ENCODE measurements at regions of chr15 and their contacts with region 1.

Region 1: DNA sequence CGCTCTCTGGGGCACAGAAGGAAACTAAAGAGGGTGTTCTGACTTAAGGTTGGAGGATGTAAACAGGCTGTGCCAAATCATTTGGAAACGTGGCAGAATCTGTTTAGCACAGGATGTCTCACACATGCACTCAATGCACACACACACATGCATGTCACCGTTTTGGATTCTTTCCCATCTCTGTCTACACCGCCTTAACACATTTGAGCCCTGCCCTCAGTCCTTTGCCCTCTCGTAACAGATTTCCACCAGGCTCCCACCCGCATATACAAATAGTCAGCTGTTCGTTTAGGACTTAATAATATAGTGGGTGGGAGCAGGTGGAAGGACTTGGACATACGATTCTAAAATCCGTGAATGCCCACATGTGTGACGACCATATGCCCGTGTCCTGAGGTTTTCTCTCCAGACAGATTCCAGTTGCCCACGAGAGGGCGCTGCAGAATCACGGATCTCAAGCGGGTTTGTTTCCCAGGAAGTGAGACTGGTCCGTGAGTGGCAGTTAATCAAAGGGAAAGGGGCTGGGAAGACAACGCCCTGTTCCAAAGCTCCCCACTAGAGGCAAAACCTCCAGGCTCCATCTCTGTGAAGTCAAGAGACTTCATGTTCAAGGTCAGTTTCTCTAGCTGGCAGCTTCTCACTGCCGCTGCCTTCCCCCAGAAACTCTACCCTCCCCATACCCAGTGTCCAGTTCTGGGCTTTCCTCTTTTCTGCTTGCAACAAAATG is 44.5 kb downstream of the NOX5 start:
- DNase-seq: peak; percentile 86
- ATAC-seq: peak; percentile 57
- H3K4me3 Mint-ChIP-seq: no peak overlapping the region
- H3K27ac Mint-ChIP-seq: no peak overlapping the region
- H3K4me1 Mint-ChIP-seq: peaks cover 20% of the 10 kb centered on the region
- H3K27me3 Mint-ChIP-seq: peaks cover 4% of the 10 kb centered on the region
- CTCF ChIP-seq: peak; percentile 95

Region 2: DNA sequence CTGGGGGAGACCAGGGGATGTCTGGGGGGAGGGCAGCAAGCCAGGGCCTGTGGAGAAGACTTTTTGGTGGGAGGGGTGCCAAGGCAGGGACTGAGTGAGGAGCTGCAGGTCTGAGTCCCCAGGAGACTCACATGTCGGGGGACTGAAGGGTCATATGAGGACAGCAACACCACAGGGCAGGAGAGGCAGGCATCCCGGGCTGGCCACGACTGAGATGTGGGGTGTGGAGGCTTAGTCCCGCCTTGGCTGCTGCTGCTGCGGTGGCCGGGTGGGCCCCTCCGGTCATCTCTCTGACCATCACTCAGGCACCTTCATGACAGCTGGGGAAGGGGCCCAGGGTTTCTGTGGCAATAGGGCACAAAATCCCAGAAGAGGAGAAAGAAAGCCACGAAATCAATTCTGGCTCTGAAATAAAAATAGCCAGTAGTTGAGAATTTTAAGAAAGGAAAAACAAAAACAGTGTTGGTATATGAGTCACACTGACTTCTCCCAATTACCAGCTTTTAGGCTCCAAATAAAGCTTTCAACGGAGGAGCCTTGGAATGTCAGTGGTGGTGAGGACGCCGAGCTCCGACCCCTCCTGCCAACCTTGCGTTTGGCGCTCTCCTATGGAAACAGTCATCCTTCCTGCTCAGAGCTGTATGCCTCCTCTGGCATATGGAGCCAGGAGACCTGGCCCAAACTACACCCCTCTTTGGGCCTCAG is 574.1 kb before region 1 on chr15:
- CTCF ChIA-PET with region 1: no interaction called
- POLR2A ChIA-PET with region 1: no interaction called
- intact Hi-C with region 1: no loop called
- DNase-seq: no peak
- ATAC-seq: no peak
- H3K4me3 Mint-ChIP-seq: no peak overlapping the region
- H3K27ac Mint-ChIP-seq: no peak overlapping the region
- H3K4me1 Mint-ChIP-seq: no peaks in the 10 kb centered on the region
- H3K27me3 Mint-ChIP-seq: peaks cover 12% of the 10 kb centered on the region
- CTCF ChIP-seq: no peak

Region 3: GRCh38 chr15:68991723-68992122 is 67.3 kb before region 1 on chr15:
- CTCF ChIA-PET with region 1: no interaction called
- POLR2A ChIA-PET with region 1: no interaction called
- intact Hi-C with region 1: no loop called
- DNase-seq: no peak
- ATAC-seq: no peak
- H3K4me3 Mint-ChIP-seq: no peak overlapping the region
- H3K27ac Mint-ChIP-seq: no peak overlapping the region
- H3K4me1 Mint-ChIP-seq: no peaks in the 10 kb centered on the region
- H3K27me3 Mint-ChIP-seq: no peaks in the 10 kb centered on the region
- CTCF ChIP-seq: no peak

Region 4: GRCh38 chr15:69225355-69226025 is 166.5 kb after region 1 on chr15:
- CTCF ChIA-PET with region 1: interaction called, 16 read pairs
- POLR2A ChIA-PET with region 1: no interaction called
- intact Hi-C with region 1: loop called (anchors 5 kb)
- DNase-seq: no peak
- ATAC-seq: no peak
- H3K4me3 Mint-ChIP-seq: no peak overlapping the region
- H3K27ac Mint-ChIP-seq: no peak overlapping the region
- H3K4me1 Mint-ChIP-seq: no peaks in the 10 kb centered on the region
- H3K27me3 Mint-ChIP-seq: no peaks in the 10 kb centered on the region
- CTCF ChIP-seq: no peak

Region 5: GRCh38 chr15:69265347-69265955 is 206.5 kb after region 1 on chr15:
- CTCF ChIA-PET with region 1: interaction called, 10 read pairs
- POLR2A ChIA-PET with region 1: no interaction called
- intact Hi-C with region 1: loop called (anchors 5 kb)
- DNase-seq: no peak
- ATAC-seq: no peak
- H3K4me3 Mint-ChIP-seq: no peak overlapping the region
- H3K27ac Mint-ChIP-seq: no peak overlapping the region
- H3K4me1 Mint-ChIP-seq: no peaks in the 10 kb centered on the region
- H3K27me3 Mint-ChIP-seq: no peaks in the 10 kb centered on the region
- CTCF ChIP-seq: peak; percentile 28

Region 6: DNA sequence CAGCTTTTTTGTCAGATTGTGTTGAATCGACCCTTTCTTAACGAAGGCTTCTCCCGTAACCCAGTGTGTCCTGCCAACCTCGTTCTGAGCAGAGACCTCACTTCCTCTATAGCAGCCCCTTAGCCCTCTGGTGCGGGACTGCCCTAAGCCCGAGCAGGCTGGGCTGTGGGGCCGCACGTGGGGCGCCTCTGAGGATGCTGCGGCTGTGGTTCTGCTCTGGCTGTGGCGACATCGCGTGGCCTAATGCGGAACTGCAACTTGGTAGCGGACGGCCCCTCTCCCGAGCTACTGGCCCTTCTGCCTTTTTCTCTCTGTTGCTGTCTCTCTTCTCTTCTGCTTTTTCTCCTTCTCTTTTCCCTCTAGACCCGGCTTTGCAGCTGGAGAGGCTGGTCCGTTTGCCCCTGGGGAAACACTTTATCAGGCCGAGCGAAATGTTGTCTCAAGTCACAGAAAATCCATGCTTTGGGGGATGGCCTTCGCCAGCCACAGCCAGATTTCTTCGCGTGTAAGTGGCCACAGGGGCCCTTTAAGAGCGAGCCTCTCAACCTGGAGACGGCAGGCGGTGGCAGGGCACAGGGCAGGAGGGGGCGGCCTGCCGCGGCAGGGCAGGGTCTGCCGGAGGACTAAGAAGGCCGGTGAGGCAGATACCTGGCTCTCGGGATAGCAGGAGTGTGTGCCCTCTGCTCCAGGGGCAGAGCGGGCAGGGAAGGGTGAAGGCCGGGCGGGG is 335.7 kb after region 1 on chr15:
- CTCF ChIA-PET with region 1: interaction called, 10 read pairs
- POLR2A ChIA-PET with region 1: no interaction called
- intact Hi-C with region 1: loop called (anchors 5 kb)
- DNase-seq: peak; percentile 90
- ATAC-seq: peak; percentile 98
- H3K4me3 Mint-ChIP-seq: no peak overlapping the region
- H3K27ac Mint-ChIP-seq: no peak overlapping the region
- H3K4me1 Mint-ChIP-seq: peaks cover 6% of the 10 kb centered on the region
- H3K27me3 Mint-ChIP-seq: peaks cover 3% of the 10 kb centered on the region
- CTCF ChIP-seq: peak; percentile 96